ENCODE measurements at regions of chr7 and their contacts with region 1.

Region 1: DNA sequence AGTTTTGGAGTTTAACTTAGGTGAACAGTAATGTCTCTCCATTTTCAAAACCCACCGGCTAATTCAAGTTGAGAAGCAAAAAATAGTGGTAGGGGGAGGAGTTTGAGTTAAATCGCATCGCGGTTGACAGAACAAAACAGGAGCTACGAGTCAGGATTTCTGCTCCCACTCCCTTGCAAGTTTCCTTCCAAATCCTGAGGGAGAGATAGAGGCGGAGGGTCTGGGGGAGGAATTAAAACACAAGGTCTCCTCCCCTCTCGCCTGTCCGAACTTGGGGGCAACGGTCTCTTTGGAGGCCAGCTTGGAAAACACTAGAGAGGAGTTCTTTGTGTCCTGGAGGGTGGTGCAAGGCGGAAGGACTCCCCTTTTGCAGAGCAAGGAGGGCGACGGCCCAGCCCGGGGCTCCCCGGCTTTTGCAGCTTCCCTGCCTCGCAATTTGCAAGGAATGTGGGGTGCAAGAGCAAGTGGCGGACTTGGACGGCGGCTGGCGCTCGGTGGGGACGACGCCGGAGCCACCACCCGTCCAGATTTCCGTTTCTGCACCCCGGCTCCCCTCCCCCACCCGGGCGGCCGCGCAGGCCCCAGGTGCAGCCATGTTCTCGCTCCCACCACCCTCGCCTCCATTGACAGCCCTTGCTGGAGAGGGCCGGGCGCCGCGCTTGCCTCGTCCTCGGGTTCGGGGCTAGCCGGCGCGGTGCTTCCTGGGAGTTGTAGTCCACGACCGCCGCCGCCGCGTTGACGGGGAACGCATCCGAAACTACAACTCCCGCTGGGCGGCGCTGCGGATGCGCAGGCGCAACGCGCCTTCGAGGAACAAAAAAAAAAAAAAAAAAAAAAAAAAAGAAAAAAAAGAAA is 454 bp upstream of the GTF2I start:
- DNase-seq: peak; percentile 97 to 99 (median 99)
- H3K4me3 ChIP-seq: peak overlapping the region; percentile 54
- H3K27ac ChIP-seq: peak overlapping the region in 1 of 2 donors; percentile 100
- H3K4me1 ChIP-seq: peaks cover 7% of the 10 kb centered on the region
- H3K27me3 ChIP-seq: no peaks in the 10 kb centered on the region
- CTCF ChIP-seq: no peak
- EP300 ChIP-seq: no peak
- POLR2A ChIP-seq: no peak

Region 2: DNA sequence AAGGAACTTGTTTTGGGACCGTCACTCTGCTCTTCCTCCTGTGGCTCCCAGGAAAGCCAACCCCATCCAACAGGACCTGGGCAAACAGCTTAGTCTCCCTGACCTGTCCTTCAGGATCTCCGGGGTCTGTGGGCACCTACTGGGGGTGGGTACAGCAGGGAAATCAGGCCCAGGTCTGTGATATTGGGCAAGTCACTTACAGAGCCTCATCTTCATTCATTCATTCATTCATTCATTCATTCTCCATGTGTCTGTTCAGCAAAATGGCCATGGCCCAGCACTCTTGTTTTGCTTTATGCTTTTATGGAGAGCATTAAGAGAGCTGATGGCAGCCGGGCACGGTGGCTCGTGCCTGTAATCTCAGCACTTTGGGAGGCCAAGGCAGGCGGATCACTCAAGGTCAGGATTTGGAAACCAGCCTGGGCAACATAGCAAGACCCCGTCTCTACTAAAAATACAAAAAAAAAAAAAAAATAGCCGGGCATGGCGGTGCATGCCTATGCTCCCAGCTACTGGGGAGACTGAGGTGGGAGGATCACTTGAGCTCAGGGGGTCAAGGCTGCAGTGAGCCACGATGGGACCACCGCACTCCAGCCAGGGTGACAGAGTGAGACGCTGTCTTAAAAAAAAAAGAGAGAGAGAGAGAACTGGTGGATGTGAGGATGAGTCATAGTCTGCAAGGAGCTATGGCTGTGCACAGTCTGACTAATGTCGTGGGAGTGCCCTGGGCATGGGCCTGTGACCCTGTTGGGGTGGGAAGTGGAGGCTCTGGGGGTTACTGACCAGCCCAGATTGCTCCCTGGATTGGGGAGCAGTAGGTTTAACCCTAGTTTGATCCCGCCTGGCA is 313.6 kb before region 1 on chr7:
- intact Hi-C with region 1: no loop called
- DNase-seq: no peak
- H3K4me3 ChIP-seq: no peak overlapping the region
- H3K27ac ChIP-seq: no peak overlapping the region
- H3K4me1 ChIP-seq: no peaks in the 10 kb centered on the region
- H3K27me3 ChIP-seq: no peaks in the 10 kb centered on the region
- CTCF ChIP-seq: no peak
- EP300 ChIP-seq: no peak
- POLR2A ChIP-seq: no peak

Region 3: GRCh38 chr7:74985531-74985930 is 328.5 kb after region 1 on chr7:
- intact Hi-C with region 1: loop called in 1 of 4 experiments (anchors 10 kb)
- DNase-seq: no peak
- H3K4me3 ChIP-seq: no peak overlapping the region
- H3K27ac ChIP-seq: no peak overlapping the region
- H3K4me1 ChIP-seq: no peaks in the 10 kb centered on the region
- H3K27me3 ChIP-seq: no peaks in the 10 kb centered on the region
- CTCF ChIP-seq: no peak
- EP300 ChIP-seq: no peak
- POLR2A ChIP-seq: no peak

Measured in ovary (tissue), 10 donors.